Heart right ventricle (tissue), 16 donors: ENCODE measurements at regions of chr14 and their contacts with region 1.

Region 1: DNA sequence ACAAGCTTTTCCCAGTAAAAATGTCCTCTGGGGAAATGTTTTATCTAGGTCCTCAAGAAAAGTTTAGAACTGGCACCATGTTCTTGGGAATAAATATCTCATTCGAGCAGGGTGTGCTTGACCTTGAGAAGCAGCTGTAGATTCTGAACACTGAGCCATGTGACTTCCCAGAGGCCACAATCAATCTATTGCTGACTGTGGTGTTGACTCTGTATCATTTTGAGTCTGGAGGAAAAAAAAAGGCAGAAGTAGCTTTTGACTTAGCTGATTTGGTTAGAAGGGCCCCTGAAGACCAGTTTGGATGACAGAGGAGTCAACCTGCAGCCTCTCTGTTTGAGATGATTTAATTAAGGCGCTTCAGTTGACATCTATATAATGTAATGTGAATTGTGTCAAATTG is 592.4 kb upstream of the SEL1L start:
- DNase-seq: no peak
- ATAC-seq: no peak
- H3K4me3 ChIP-seq: no peak overlapping the region
- H3K27ac ChIP-seq: no peak overlapping the region
- H3K4me1 ChIP-seq: peaks cover 0 to 4% (median 0%) of the 10 kb centered on the region in 9 donors
- H3K27me3 ChIP-seq: no peaks in the 10 kb centered on the region
- CTCF ChIP-seq: no peak

Region 2: DNA sequence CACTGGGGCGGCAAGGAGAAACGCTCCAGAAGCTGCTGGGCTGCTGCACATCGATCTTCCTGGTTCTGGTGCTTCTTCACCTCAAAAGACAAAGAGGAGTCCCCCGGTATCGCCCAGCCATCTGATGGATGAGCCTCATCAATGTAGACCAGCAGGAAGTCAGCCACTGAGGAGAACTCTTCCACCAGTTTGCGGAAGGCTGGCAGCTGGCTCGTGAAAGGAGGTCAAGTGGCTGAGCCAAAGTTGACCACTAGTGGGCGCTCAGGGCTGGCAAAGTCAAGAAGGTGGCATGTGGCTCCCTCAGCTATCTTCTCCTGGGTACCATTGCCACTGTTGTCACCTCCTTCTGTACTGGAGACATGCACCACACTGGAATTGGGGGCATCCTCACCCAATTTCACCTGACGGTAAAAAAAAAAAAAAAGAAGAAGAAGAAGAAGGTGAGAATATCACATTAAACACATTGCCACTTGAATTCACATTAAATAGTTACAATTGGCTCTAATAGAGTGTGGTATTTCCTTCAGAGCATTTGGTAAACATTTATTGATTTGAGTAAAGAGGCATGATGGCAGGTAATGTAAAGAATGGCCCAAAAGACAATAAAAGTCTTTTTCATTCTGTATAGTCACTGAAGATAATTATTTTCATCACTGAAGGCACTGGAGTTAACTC is 1923.0 kb before region 1 on chr14:
- intact Hi-C with region 1: loop called in 1 of 10 experiments (anchors 5 kb)
- DNase-seq: no peak
- ATAC-seq: no peak
- H3K4me3 ChIP-seq: no peak overlapping the region
- H3K27ac ChIP-seq: no peak overlapping the region
- H3K4me1 ChIP-seq: no peaks in the 10 kb centered on the region
- H3K27me3 ChIP-seq: no peaks in the 10 kb centered on the region
- CTCF ChIP-seq: peak in 2 of 9 donors; percentile 20 to 24

Region 3: GRCh38 chr14:81946834-81947798 is 178.9 kb before region 1 on chr14:
- intact Hi-C with region 1: no loop called
- DNase-seq: peak in 1 of 2 donors; percentile 7
- ATAC-seq: peak in 5 of 8 donors; percentile 57 to 85 (median 71)
- H3K4me3 ChIP-seq: no peak overlapping the region
- H3K27ac ChIP-seq: peak overlapping the region in 1 of 10 donors; percentile 22
- H3K4me1 ChIP-seq: no peaks in the 10 kb centered on the region
- H3K27me3 ChIP-seq: no peaks in the 10 kb centered on the region
- CTCF ChIP-seq: no peak